PC-9 (cell line): ENCODE measurements at regions of chr15 and their contacts with region 1.

Region 1: GRCh38 chr15:52862677-52863076 is 72.5 kb upstream of the ONECUT1 start:
- DNase-seq: no peak
- H3K4me3 ChIP-seq: no peak overlapping the region
- H3K27ac ChIP-seq: no peak overlapping the region
- H3K4me1 ChIP-seq: no peaks in the 10 kb centered on the region
- H3K27me3 ChIP-seq: peaks cover 28% of the 10 kb centered on the region
- CTCF ChIP-seq: no peak

Region 2: DNA sequence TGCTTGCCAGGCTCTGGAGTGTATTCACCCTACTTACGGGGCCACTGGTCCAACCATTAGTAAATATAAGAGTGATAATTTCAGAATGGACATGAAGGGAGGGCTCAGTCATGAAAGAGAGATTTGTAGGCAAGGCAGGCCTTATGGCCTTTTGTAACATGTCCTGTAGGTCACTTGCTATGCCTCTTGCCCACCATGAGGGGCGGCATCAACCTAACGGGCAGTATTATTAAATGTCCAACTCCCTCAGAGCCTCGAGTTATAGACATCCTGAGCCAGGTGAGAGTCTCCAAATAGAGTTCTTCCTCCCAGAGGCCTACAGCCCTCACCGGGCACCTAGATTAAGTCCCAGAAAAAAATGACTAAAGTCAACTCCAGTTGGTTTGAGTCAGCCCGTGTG is 102.7 kb before region 1 on chr15:
- CTCF ChIA-PET with region 1: no interaction called
- POLR2A ChIA-PET with region 1: no interaction called
- intact Hi-C with region 1: no loop called
- DNase-seq: no peak
- H3K4me3 ChIP-seq: no peak overlapping the region
- H3K27ac ChIP-seq: no peak overlapping the region
- H3K4me1 ChIP-seq: no peaks in the 10 kb centered on the region
- H3K27me3 ChIP-seq: peaks cover 4% of the 10 kb centered on the region; the same call in 1 of the 2 replicates
- CTCF ChIP-seq: no peak

Region 3: GRCh38 chr15:52822475-52822874 is 40.2 kb before region 1 on chr15:
- CTCF ChIA-PET with region 1: no interaction called
- POLR2A ChIA-PET with region 1: no interaction called
- intact Hi-C with region 1: no loop called
- DNase-seq: no peak
- H3K4me3 ChIP-seq: no peak overlapping the region
- H3K27ac ChIP-seq: no peak overlapping the region
- H3K4me1 ChIP-seq: no peaks in the 10 kb centered on the region
- H3K27me3 ChIP-seq: peaks cover 24% of the 10 kb centered on the region
- CTCF ChIP-seq: no peak

Region 4: GRCh38 chr15:53038655-53038941 is 175.9 kb after region 1 on chr15:
- CTCF ChIA-PET with region 1: no interaction called
- POLR2A ChIA-PET with region 1: interaction called, 21 read pairs
- intact Hi-C with region 1: no loop called
- DNase-seq: no peak
- H3K4me3 ChIP-seq: no peak overlapping the region
- H3K27ac ChIP-seq: no peak overlapping the region
- H3K4me1 ChIP-seq: no peaks in the 10 kb centered on the region
- H3K27me3 ChIP-seq: no peaks in the 10 kb centered on the region
- CTCF ChIP-seq: no peak